Activated T-helper 1 cell treated with anti-CD3 and anti-CD28 coated beads, Interleukin-12 subunit alpha, Interleukin-12 subunit beta, Interleukin-2, Interleukin-4 antibody, amounts not matched to agents 30 ng/mL and 10 ng/mL and 1 ng/mL, durations not matched to agents 14 hours and 24 hours and 36 hours (primary cell): ENCODE measurements at regions of chr15 and their contacts with region 1.

Region 1: GRCh38 chr15:41116116-41116871 is at the start of gene INO80:
- DNase-seq: peak; percentile 95
- H3K4me3 Mint-ChIP-seq: peak within 1 kb of the TSS; percentile 92
- H3K27ac Mint-ChIP-seq: peak within 1 kb of the TSS; percentile 99
- H3K4me1 Mint-ChIP-seq: peaks cover 20% of the 10 kb centered on the region
- H3K27me3 Mint-ChIP-seq: peaks cover 6% of the 10 kb centered on the region
- total RNA-seq, gene INO80: 39.2 and 39.6 TPM in 2 replicates

Region 2: DNA sequence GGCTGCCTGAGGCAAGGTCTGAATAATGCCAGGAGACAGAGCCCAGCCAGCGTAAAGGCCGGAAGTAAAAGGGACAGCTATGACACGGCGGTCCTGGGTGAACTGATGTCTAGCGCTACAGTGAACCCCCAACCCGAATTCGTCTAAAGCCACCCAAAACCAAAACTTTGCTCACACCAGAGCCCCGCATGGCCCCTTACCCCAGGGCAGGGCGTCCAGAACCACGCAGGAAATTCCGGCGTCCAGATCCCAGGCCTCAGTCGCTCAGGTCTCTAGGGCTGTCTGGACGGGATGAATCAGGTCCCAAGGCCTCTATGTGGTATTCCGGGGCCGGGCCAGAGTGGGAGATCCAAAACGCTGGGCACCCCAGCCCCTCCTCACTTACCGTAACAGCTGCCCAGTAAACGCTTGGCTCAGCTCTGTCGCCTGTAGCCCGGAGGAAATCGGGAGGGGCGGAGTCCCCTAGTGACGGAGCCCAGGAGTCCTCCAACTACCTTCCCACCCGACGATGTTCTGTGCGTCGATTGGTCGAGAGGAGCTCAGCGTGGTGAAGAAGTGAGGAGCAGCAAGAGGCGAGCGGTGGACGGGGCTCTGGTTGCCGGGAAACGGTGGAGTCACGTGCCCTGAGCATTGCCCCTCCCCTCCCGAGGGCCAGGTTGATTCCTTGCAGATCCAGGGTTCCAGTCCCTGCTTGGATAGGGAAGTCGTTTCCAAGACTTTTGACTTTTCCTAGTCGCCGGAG is 551.5 kb before region 1 on chr15 and contains the start of gene CCDC32:
- intact Hi-C with region 1: loop called (anchors 10 kb)
- DNase-seq: peak; percentile 96
- H3K4me3 Mint-ChIP-seq: peak within 1 kb of the TSS; percentile 96
- H3K27ac Mint-ChIP-seq: peak within 1 kb of the TSS; percentile 96
- H3K4me1 Mint-ChIP-seq: peaks cover 43% of the 10 kb centered on the region
- H3K27me3 Mint-ChIP-seq: no peaks in the 10 kb centered on the region
- total RNA-seq, gene CCDC32: 28.4 and 36.9 TPM in 2 replicates

Region 3: DNA sequence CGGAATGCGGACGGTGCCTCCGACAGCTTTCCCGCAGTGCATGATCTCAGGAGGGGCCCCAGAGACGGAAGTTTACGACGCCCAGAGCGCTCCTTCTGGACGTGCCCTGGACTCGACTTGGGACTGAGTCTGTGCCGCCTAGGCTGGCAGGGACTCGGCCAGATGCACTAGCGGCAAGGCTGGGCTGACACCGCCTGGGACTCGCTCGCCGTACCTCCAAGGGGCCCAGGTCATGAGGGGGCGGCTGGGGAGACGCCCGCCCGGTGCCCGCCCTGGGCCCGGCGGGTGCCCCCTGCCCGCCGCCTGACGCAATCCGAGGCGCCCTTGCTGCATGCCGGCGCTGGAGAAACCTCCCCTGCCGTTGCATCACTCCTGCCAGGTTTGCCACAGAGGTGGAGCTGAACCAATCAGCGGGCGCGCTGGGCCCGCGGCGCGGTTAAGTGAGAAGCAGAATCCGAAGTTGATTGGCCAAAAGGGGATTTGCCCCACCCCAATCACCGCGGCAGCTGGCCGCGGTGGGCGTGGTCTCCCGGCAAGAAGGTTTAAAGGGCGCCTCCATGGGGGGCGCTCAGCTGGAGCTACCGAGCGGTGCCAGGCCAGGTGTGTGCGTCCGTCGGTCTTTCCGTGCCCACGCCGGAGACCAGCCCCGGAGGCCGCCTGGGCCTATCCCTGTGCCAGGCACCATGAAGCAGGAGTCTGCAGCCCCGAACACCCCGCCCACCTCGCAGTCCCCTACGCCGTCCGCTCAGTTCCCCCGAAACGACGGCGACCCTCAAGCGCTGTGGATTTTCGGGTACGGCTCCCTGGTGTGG is 163.2 kb before region 1 on chr15 and contains the start of gene CHAC1:
- intact Hi-C with region 1: loop called (anchors 2 kb)
- DNase-seq: peak; percentile 96
- H3K4me3 Mint-ChIP-seq: peak within 1 kb of the TSS; percentile 92
- H3K27ac Mint-ChIP-seq: peak within 1 kb of the TSS; percentile 89
- H3K4me1 Mint-ChIP-seq: peaks cover 48% of the 10 kb centered on the region
- H3K27me3 Mint-ChIP-seq: no peaks in the 10 kb centered on the region
- total RNA-seq, gene CHAC1: 11.7 and 12.4 TPM in 2 replicates

Region 4: DNA sequence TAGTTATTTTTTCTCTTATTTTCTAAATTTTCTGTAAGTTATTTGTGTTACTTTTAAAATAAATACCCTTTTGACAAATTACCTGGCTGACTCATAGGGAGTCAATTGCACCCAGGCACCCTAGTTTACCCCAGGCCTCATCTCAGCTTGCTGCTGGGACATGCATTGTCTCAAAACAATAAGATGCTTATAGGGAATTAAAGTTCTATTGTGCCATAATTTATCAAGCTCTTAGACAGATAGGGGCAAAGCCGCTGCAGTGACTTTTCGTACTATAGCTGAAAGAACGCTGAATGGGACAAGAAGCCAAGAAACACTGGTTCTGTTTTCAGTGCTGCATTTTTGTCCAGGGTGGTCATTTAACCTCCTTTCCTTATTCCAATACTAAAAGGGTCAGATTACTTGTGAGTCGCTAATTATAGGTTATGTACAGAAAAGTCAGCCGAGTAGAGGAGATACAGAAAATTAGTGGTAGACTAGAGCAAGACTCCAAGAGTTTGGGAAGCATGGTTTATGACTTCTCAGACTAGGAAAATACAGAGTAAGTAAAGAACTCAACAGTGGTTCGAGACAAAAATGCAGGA is 64.0 kb after region 1 on chr15:
- intact Hi-C with region 1: loop called (anchors 2 kb)
- DNase-seq: no peak
- H3K4me3 Mint-ChIP-seq: no peak overlapping the region
- H3K27ac Mint-ChIP-seq: no peak overlapping the region
- H3K4me1 Mint-ChIP-seq: no peaks in the 10 kb centered on the region
- H3K27me3 Mint-ChIP-seq: peaks cover 15% of the 10 kb centered on the region

Region 5: DNA sequence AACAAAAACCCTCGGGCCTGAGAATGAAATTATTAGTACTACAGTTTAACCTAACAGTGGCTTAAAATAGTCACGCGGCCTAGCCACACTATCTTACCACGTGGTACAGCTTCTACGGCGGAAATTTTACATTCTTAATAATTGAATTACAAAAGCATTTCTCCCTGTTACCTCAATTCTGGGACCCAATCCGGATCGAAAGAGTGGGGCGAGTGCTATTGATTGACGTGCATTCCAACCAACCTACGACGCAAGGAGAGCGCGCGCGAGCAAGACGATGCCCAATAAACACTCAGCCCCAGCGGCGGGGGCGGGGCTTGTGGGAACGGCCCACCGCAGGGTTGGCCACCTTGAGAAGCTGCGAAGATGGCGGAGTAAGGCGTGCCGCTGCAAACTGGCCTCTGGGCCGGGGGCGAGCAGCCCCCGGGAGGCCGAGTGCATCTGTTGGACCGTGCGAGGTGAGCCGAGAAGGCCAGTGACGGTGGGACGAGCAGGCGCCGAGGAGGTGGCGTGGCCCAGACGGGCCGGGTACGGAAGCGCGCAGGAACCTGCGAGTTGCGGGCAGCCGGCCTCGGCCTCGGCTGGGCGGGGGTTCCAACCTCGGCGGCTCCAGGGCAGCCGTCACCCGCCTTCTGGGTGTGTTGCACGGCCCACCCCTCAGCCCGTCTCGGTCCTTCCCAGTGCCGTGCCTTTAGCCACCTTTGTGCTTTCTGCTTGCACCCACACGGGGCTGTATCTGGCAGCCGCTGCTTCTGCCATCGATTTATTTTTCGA is 167.5 kb after region 1 on chr15:
- intact Hi-C with region 1: loop called (anchors 1 kb)
- DNase-seq: peak; percentile 96
- H3K4me3 Mint-ChIP-seq: peak overlapping the region; percentile 97
- H3K27ac Mint-ChIP-seq: peak overlapping the region; percentile 92
- H3K4me1 Mint-ChIP-seq: peaks cover 51% of the 10 kb centered on the region
- H3K27me3 Mint-ChIP-seq: no peaks in the 10 kb centered on the region

Region 6: GRCh38 chr15:41401904-41402267 is 285.6 kb after region 1 on chr15:
- intact Hi-C with region 1: loop called (anchors 1 kb)
- DNase-seq: no peak
- H3K4me3 Mint-ChIP-seq: peak overlapping the region; percentile 89
- H3K27ac Mint-ChIP-seq: peak overlapping the region; percentile 87
- H3K4me1 Mint-ChIP-seq: peaks cover 13% of the 10 kb centered on the region
- H3K27me3 Mint-ChIP-seq: no peaks in the 10 kb centered on the region